Dendritic cell treated with granulocyte-macrophage colony-stimulating factor and Interleukin-4, amounts not matched to agents 40 ng/mL and 50 ng/mL, for 4 days (primary cell): ENCODE measurements at regions of chr3 and their contacts with region 1.

Region 1: GRCh38 chr3:172666873-172667694 is 43.8 kb downstream of the NCEH1 start:
- H3K4me3 Mint-ChIP-seq: no peak overlapping the region
- H3K27ac Mint-ChIP-seq: no peak overlapping the region
- H3K4me1 Mint-ChIP-seq: peaks cover 24% of the 10 kb centered on the region
- H3K27me3 Mint-ChIP-seq: no peaks in the 10 kb centered on the region

Region 2: GRCh38 chr3:172332256-172333041 is 334.6 kb before region 1 on chr3:
- intact Hi-C with region 1: loop called (anchors 5 kb)
- H3K4me3 Mint-ChIP-seq: no peak overlapping the region
- H3K27ac Mint-ChIP-seq: no peak overlapping the region
- H3K4me1 Mint-ChIP-seq: peaks cover 9% of the 10 kb centered on the region
- H3K27me3 Mint-ChIP-seq: no peaks in the 10 kb centered on the region

Region 3: DNA sequence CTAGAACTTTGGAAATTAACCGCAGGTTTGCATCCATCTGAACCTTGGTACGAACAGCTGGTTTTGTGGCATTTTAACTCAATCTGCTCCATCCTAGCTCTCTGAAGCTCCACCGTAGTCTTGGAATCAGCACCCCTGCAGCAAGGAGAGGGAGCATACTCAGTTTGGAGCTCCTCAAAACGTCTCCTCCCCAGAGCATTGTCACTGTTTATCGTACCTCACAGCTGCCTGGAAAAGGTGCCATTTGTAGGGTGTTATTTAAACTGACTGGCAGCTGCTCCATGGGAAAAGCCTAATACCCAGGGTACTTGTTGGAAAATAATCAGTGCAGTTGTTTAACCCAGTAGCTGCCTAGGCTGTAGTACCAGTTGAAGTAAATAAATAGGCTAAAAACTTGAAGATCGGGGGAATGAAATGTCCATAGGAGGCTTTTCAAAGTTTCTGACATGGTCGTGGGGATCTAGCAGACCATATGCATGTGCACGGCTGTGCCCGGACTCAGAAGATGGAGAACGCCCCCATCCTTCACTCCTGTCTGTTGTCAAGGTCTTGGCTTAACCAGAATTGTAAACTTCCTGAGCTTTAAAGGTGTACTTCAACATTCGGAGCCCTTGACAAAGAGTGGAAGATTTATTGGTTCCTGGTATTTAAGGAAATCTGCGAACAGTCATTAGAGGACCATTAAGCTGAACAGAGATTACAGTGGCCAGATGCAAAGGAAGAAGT is 262.7 kb before region 1 on chr3:
- intact Hi-C with region 1: no loop called
- H3K4me3 Mint-ChIP-seq: no peak overlapping the region
- H3K27ac Mint-ChIP-seq: no peak overlapping the region
- H3K4me1 Mint-ChIP-seq: no peaks in the 10 kb centered on the region
- H3K27me3 Mint-ChIP-seq: no peaks in the 10 kb centered on the region

Region 4: GRCh38 chr3:172595641-172596393 is 71.3 kb before region 1 on chr3:
- intact Hi-C with region 1: loop called (anchors 1 kb)
- H3K4me3 Mint-ChIP-seq: peak overlapping the region; percentile 60
- H3K27ac Mint-ChIP-seq: peak overlapping the region; percentile 65
- H3K4me1 Mint-ChIP-seq: peaks cover 52% of the 10 kb centered on the region
- H3K27me3 Mint-ChIP-seq: peaks cover 2% of the 10 kb centered on the region

Region 5: GRCh38 chr3:172739462-172739861 is 72.4 kb after region 1 on chr3:
- intact Hi-C with region 1: no loop called
- H3K4me3 Mint-ChIP-seq: no peak overlapping the region
- H3K27ac Mint-ChIP-seq: no peak overlapping the region
- H3K4me1 Mint-ChIP-seq: no peaks in the 10 kb centered on the region
- H3K27me3 Mint-ChIP-seq: no peaks in the 10 kb centered on the region